Head of caudate nucleus (tissue), 42 donors: ENCODE measurements at regions of chr12 and their contacts with region 1.

Region 1: DNA sequence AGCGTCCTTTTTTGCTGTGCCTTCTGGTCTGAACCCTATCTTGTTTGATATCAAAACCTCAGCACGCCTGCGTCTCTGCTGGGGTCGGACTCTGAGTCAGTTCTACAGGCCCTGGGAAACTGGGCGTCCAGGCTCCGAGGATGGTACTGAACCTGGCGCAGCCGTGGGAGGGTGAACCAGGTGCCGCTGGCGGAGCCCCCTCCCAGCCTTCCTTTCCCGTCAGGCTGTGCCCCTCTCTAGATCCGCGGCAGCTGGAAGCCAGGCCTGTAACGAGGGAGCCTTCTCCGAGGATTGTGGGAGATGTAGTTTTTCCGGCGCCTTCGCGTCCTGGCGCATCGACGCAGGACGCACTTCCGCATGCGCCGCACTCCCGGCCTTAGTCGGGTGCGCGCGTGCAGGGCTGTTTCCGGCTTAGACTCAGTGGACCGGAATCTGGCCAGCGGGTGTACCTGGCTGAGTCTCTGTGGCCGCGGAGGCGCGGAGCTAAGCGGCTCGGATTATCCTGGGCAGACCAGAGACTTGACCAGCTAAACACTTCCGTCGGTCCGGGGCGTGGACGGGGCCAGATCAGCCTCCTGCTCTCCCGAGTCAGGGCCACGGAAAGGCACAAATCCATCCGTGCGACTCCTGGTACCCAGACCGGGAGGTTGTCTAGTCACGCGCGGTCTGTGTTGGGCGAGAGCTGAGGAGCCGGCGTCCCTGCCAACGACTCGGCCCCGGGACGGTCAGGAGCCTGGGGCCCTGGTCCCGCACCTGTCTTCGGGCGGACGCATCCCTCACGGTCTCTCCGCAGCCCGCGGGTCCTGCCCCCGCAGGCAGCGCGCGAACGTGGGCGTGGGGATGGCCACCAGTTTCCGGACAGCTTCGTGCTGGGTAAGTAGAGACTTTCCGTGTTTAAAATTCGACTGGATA is at the start of gene ZNF26:
- DNase-seq: peak; percentile 84 to 97 (median 93)

Region 2: DNA sequence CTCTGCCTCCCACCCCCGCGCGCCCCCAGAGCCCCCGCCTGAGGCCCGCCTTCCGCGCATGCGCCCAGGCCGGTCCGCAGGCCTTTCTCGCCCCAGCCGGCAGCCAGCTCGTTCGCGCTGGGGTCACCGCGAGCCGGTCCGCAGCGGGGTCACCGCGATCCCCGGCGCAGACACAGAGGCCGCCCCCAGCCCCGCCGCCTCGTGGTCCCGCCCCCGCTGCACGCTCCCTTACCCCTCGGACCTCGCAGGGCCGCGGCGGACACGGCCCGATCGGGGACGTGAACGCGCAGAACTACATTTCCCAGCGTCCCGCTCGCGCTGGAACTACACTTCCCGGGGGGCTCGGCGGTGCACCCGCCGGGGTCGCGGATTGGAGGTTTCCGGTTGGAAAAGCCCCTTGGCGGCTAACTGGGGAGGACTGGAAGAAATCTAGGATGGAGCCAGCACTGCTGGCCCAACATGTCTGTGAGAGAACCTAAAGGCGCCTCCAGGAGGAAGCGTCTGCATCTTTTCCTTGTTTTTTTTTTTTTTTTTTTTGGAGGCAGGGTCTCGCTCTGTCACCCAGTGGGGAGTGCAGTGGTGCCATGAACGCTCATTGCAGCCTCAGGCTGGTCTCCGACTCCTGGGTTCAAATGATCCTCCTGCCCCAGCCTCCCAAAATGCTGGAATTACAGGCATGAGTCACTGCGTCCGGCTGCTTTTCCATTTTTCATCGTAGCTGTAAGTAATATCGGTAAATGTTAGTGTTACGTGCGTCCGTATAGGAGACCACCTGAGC is 30.1 kb before region 1 on chr12 and contains the start of gene ZNF605:
- intact Hi-C with region 1: loop called (anchors 2 kb)
- DNase-seq: peak; percentile 81 to 97 (median 93)

Region 3: DNA sequence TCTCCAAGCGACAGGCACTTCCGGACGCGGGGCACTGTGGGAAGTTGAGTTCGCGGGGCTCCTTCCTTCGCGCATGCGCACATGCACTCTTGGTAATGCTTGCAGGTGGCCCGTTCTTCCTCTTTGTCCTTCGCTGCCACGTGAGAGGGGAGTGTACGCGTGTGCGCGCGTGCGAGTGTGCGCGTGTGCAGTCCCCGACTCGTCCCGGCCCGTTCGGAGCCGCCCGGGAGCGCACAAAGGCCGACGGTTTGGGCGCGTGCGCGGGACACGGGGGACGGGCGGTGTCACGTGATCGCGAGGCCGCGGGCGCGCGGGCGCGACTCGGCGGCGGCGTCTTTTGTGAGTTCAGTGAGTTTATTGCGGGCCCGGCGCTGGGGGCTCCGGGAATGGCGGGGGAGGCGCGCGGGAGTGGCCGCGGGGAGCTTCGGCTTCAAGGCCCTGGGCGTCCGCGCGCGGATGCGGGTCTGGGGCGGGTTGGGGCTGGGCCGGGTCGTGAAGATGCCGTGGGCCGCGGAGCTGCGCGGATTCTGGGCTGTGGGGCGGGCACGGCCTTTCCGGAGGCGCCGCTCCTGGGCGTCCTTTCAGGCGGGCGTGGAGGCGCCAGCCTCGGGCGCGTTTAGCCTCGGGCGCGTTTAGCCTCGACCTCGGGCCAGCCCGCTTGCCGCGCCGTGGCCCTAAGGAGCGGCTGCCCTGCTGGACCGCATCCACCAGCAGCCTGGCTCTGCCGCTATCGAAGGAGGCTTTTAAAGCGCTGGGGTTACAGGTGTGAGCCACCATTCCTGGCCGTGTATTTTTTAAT is 51.1 kb after region 1 on chr12 and contains the start of gene ZNF84:
- intact Hi-C with region 1: loop called (anchors 2 kb)
- DNase-seq: peak; percentile 87 to 98 (median 94)